GM13976 (cell line): ENCODE measurements at regions of chr1 and their contacts with region 1.

Region 1: GRCh38 chr1:55131801-55132200 is 83.4 kb downstream of the USP24 start:
- DNase-seq: no peak
- CTCF ChIP-seq: no peak

Region 2: GRCh38 chr1:55277377-55278130 is 145.8 kb after region 1 on chr1:
- in situ Hi-C with region 1: loop called (anchors 10 kb)
- DNase-seq: peak; percentile 77
- CTCF ChIP-seq: peak; percentile 66